Activated CD4-positive, alpha-beta memory T cell treated with anti-CD3 and anti-CD28 coated beads for 36 hours (primary cell): ENCODE measurements at regions of chr7 and their contacts with region 1.

Region 1: DNA sequence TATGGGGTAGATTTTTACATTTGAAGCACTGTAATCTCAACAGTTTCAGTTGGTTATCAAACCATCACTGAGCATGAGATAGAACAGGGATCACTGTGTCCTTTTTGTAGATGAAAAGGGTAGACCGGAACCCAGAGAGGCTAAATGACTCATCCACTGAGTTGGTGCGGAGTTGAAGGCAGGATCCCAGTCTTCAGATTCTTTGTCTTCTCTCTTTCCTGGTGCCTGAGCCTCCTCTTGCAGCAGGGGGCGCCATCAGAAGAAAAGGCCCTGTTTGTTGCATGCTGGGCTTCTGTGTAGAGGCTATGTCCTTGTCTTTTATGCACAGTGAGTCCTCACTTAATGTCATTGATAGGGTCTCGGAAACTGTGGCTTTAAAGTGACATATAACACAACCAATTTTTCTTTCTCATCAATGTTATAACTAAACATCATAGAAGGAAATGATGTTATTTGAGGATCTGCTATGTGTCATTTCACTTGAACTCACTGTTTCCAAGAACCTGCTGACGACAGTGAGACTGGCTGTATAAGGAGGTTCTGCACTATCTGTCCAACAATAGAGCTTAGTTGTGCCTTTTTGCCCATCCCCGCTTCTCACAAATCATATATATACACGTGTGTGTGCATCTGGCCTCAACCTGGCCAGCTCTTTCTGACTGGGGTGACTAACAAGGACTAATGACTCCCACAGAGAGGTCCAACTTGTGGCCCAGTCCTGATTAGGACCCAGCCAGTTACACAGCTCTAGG is 14.3 kb downstream of the ZNF282 start:
- DNase-seq: peak; percentile 97
- H3K4me3 Mint-ChIP-seq: peak overlapping the region; percentile 56
- H3K27ac Mint-ChIP-seq: peak overlapping the region; percentile 98
- H3K4me1 Mint-ChIP-seq: peaks cover 40% of the 10 kb centered on the region
- H3K27me3 Mint-ChIP-seq: no peaks in the 10 kb centered on the region

Region 2: DNA sequence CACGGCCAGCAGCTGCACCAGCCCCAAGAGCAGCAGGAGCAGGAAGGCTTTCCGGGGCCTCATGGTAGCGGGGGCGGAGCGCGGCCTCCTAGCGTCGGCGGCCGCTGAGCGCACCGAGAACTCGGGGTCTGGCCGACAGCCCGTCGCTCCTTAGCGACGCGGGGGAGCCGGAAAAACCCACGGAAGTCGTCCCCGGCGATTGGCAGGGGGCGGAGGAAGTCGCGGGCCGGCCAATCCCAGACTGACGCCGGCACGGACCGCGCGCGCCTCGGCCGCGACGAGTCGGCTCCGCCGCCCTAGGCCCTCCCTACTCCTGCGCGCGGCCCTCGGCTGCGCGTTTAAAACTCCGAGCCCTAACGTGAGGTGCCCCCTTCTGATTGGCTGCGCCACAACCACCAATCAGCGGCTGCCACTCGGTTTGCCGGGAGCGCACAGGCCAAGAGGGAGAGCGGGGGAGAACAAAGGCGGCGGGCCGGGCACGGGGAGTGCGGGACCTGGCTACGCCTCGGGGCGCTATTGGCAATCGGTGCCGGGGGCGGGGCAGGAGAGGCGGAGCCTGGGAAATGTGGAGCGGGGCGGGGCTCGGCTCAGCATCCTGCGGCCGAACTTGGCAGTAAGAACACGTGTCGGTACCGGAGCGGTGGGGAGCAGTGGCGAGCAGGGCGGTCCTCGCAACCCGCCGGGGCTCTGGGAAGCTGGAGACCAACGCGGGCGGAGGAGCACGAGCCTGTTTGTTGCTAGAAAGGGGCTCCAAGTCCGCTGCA is 181.2 kb before region 1 on chr7 and contains the start of gene PDIA4:
- CTCF ChIA-PET with region 1: no interaction called
- POLR2A ChIA-PET with region 1: no interaction called
- intact Hi-C with region 1: loop called (anchors 1 kb)
- DNase-seq: peak; percentile 100
- H3K4me3 Mint-ChIP-seq: peak within 1 kb of the TSS; percentile 96
- H3K27ac Mint-ChIP-seq: peak within 1 kb of the TSS; percentile 88
- H3K4me1 Mint-ChIP-seq: peaks cover 33% of the 10 kb centered on the region
- H3K27me3 Mint-ChIP-seq: no peaks in the 10 kb centered on the region
- total RNA-seq, gene PDIA4: 108 to 112 TPM

Region 3: DNA sequence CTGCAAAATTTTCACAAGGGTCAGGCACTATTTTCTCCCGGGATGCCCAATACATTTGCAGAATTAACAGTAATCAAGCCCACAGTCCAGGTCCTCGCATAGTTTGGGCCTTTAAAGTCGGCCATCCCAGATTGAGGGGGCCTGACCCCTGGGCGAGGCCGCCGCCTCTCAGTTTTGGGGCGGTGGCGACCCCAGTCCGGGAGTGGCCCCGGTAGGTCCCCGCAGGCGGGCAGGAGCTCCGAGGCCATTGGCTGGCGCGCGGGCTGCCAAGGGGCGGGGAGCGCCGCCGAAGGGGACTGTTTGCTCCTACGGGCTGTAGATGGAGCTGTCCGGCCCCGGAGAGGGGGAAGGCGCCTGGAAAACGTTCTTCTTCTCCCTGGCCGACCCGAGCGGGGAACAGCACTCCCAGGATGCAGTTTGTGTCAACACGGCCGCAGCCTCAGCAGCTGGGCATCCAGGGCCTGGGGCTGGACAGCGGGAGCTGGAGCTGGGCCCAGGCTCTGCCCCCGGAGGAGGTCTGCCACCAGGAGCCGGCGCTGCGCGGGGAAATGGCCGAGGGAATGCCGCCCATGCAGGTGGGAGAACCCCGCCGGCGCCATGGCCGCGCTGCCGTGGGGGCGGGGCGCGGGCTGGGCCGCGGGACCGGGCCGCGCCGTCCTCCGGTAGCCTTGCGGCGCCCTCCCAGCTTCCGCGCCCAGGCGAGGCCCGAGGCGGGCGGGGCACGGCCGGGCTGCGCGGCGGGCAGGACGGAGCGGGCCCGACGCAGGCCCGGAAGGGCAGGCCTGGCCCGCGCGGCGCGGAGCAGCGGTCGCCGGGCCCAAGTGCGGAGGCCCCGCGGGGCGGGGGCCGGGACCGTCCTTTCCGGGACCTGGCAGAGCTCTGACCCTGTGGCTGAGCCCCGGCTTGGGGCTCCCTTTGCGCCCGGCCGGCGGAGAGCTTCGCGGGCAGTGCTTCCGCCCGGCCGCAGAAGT is 14.2 kb before region 1 on chr7 and contains the start of gene ZNF282:
- CTCF ChIA-PET with region 1: interaction called, 16 read pairs
- POLR2A ChIA-PET with region 1: interaction called, 17 read pairs
- intact Hi-C with region 1: loop called (anchors 1 kb)
- DNase-seq: peak; percentile 89
- H3K4me3 Mint-ChIP-seq: peak within 1 kb of the TSS; percentile 92
- H3K27ac Mint-ChIP-seq: peak within 1 kb of the TSS; percentile 93
- H3K4me1 Mint-ChIP-seq: peaks cover 51% of the 10 kb centered on the region
- H3K27me3 Mint-ChIP-seq: no peaks in the 10 kb centered on the region
- total RNA-seq, gene ZNF282: 61.7 to 61.9 TPM

Region 4: DNA sequence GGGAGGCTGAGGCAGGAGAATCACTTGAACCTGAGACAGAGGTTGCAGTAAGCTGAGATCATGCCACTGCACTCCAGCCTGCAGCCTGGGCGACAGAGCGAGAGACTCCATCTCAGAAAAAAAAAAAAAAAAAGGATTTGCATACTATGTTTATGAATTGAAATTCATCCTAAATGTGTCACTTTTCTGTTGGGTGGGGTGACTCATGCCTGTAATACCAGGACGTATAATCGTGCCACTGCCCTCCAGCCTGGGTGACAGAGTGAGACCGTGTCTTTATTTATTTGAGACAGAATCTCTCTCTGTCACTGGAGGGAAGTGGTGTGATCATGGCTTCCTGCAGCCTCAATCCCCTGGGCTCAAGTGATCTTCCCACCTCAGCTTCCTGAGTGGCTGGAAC is 35.5 kb after region 1 on chr7:
- CTCF ChIA-PET with region 1: interaction called, 8 read pairs
- POLR2A ChIA-PET with region 1: interaction called, 15 read pairs
- intact Hi-C with region 1: loop called (anchors 1 kb)
- DNase-seq: peak; percentile 82
- H3K4me3 Mint-ChIP-seq: peak overlapping the region; percentile 43
- H3K27ac Mint-ChIP-seq: peak overlapping the region; percentile 91
- H3K4me1 Mint-ChIP-seq: peaks cover 66% of the 10 kb centered on the region
- H3K27me3 Mint-ChIP-seq: no peaks in the 10 kb centered on the region

Region 5: DNA sequence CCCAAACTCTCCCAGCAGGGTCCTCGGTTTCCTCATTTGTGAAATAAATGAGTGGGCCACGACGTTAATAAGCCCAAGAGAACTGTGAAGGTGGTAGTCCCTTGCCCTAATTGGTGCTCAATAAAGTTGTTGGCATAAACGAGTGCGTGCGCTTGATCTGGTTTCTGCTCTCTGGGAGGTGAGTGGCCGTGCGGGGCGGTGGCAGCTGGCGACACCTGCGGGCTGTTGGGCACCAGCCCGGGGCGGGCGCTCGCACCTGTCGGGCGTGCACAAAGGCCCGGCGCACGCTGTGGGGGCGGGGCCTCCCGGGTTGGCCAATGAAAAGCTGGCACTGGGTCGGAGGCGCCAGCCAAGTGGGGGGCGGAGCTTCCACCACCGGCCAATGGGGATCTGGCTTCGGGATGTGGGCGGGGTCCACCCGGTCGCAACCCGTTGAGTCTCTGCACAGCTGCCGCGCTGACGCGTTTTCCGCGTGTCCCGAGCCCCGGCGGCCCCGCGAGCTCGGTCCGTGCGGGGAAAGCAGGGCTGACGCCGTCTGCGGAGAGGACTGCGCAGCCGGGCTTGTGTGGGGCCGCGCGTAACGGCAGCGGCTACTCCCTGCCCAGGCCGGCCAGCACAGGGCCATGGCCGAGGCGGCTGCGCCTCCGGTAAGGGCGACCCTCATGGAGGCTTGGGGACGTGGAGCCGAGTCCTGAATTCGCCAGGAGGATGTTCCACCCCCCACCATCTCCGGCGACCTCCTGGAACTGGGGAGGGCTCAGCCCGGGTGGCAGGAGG is 75.3 kb after region 1 on chr7:
- CTCF ChIA-PET with region 1: interaction called, 10 read pairs
- POLR2A ChIA-PET with region 1: interaction called, 5 read pairs
- intact Hi-C with region 1: no loop called
- DNase-seq: peak; percentile 99
- H3K4me3 Mint-ChIP-seq: peak overlapping the region; percentile 82
- H3K27ac Mint-ChIP-seq: peak overlapping the region; percentile 48
- H3K4me1 Mint-ChIP-seq: peaks cover 37% of the 10 kb centered on the region
- H3K27me3 Mint-ChIP-seq: no peaks in the 10 kb centered on the region

Region 6: GRCh38 chr7:149317986-149318672 is 108.4 kb after region 1 on chr7:
- CTCF ChIA-PET with region 1: no interaction called
- POLR2A ChIA-PET with region 1: no interaction called
- intact Hi-C with region 1: no loop called
- DNase-seq: peak; percentile 38
- H3K4me3 Mint-ChIP-seq: no peak overlapping the region
- H3K27ac Mint-ChIP-seq: no peak overlapping the region
- H3K4me1 Mint-ChIP-seq: peaks cover 17% of the 10 kb centered on the region
- H3K27me3 Mint-ChIP-seq: peaks cover 2% of the 10 kb centered on the region

Region 7: GRCh38 chr7:149598721-149599306 is 389.1 kb after region 1 on chr7:
- CTCF ChIA-PET with region 1: no interaction called
- POLR2A ChIA-PET with region 1: no interaction called
- intact Hi-C with region 1: loop called (anchors 1 kb)
- DNase-seq: peak; percentile 66
- H3K4me3 Mint-ChIP-seq: no peak overlapping the region
- H3K27ac Mint-ChIP-seq: peak overlapping the region; percentile 72
- H3K4me1 Mint-ChIP-seq: peaks cover 35% of the 10 kb centered on the region
- H3K27me3 Mint-ChIP-seq: no peaks in the 10 kb centered on the region